IMR-90 (cell line): ENCODE measurements at regions of chr13 and their contacts with region 1.

Region 1: DNA sequence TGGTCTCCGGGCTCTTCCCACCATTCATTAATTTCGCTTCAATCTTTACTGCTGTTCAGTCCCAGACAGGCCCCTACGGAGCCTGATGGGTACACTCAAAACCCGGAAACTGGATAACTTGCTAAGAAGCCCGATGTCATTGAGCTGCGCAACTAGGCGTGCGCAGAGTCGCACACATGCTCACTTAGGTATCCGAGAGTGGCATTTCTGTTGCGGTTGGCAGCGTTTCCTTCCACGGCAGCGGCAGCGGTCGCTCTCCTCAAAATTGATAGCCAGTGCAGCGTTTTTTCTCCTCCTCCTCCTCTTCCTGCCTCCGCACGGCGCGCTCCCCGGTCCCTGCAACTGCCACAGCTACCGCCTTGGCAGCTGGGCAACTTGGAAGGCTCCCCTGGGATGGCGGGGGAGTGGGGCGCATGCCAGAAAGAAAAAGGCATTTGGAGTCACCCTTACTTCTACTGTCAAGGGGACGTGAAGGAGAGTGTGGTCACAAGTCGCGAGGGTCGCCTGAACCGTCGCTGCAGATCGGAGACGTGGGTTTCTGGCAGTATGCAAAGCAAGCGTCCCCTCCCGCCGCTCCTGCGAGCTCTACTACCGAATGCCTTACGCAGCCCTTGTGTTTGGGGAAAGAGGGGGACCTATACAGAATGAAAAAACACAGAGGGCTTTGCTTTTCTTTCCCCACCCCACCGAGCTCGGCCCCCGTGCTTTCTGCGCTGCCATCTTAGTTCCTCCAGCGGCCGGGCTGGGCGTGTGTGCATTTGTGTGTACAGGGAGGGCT is 2.4 kb upstream of the MYCBP2 start:
- DNase-seq: peak; percentile 96
- ATAC-seq: peak; percentile 74
- H3K4me3 ChIP-seq: peak overlapping the region; percentile 80
- H3K27ac ChIP-seq: peak overlapping the region; percentile 76
- H3K4me1 ChIP-seq: no peaks in the 10 kb centered on the region
- H3K27me3 ChIP-seq: peaks cover 2% of the 10 kb centered on the region
- CTCF ChIP-seq: no peak
- POLR2A ChIP-seq: no peak
- RAD21 ChIP-seq: no peak

Region 2: DNA sequence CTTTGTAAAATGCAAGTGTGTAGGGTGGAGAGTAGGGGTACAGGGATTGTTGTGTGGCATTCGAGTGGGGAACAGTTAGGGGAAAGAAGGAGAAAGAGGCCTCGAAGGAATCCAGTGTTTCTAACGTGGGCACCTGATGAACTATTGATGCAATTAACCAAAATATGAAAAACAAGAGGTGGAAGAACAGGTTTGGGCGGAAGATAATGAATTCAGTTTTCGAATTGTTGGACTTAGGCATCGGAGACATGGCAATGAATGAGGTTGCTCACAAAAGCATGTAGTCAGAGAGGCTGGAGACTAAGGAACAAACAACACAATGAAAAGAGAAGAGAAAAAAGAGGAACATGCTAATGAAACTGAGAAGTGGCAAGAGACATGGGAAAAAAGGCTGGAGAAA is 1500.5 kb before region 1 on chr13:
- CTCF ChIA-PET with region 1: no interaction called
- POLR2A ChIA-PET with region 1: no interaction called
- dilution Hi-C with region 1: no loop called
- in situ Hi-C with region 1: no loop called
- intact Hi-C with region 1: no loop called
- DNase-seq: no peak
- ATAC-seq: no peak
- H3K4me3 ChIP-seq: no peak overlapping the region
- H3K27ac ChIP-seq: no peak overlapping the region
- H3K4me1 ChIP-seq: peaks cover 6% of the 10 kb centered on the region; the same call in 1 of the 2 replicates
- H3K27me3 ChIP-seq: no peaks in the 10 kb centered on the region
- CTCF ChIP-seq: no peak
- POLR2A ChIP-seq: no peak
- RAD21 ChIP-seq: no peak

Region 3: GRCh38 chr13:77026818-77027585 is 302.3 kb before region 1 on chr13 and contains the start of gene FBXL3:
- CTCF ChIA-PET with region 1: no interaction called
- POLR2A ChIA-PET with region 1: no interaction called
- dilution Hi-C with region 1: no loop called
- in situ Hi-C with region 1: no loop called
- intact Hi-C with region 1: loop called (anchors 2 kb)
- DNase-seq: peak; percentile 94
- ATAC-seq: peak; percentile 81
- H3K4me3 ChIP-seq: peak within 1 kb of the TSS; percentile 93
- H3K27ac ChIP-seq: peak within 1 kb of the TSS; percentile 94
- H3K4me1 ChIP-seq: peaks cover 12% of the 10 kb centered on the region
- H3K27me3 ChIP-seq: no peaks in the 10 kb centered on the region
- CTCF ChIP-seq: no peak
- POLR2A ChIP-seq: peak; percentile 53; the same call in 1 of the 2 replicates
- RAD21 ChIP-seq: no peak
- total RNA-seq, gene FBXL3: 43.6 and 51.1 TPM in 2 replicates

Region 4: DNA sequence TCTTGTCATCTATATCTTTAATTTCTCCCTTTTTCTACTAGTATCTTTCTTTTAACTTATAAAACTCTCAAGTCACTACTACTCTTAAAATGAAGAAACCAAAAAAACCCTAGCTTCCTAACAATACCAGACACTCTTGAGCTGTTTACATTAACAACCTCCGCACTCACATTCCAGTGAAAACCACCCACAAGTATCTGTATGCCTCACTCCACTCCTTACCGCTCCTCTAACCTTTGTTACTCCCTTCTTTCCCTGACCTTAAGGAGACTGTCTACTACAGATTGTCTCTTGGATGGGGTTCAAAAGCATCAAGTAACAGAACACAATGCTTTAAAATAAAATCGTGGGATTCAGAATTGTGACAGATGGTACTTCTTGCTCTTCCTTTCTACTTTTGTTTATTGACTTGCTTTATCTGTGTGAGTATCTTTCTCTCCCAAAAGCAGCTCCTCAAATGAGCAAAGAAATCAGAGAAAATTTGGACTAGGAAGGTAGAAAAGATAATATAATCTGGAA is 192.4 kb before region 1 on chr13:
- CTCF ChIA-PET with region 1: interaction called, 3 read pairs
- POLR2A ChIA-PET with region 1: no interaction called
- dilution Hi-C with region 1: no loop called
- in situ Hi-C with region 1: no loop called
- intact Hi-C with region 1: loop called (anchors 1 kb)
- DNase-seq: peak; percentile 95
- ATAC-seq: peak; percentile 98
- H3K4me3 ChIP-seq: no peak overlapping the region
- H3K27ac ChIP-seq: no peak overlapping the region
- H3K4me1 ChIP-seq: peaks cover 3% of the 10 kb centered on the region; the same call in 1 of the 2 replicates
- H3K27me3 ChIP-seq: no peaks in the 10 kb centered on the region
- CTCF ChIP-seq: no peak
- POLR2A ChIP-seq: no peak
- RAD21 ChIP-seq: no peak

Region 5: DNA sequence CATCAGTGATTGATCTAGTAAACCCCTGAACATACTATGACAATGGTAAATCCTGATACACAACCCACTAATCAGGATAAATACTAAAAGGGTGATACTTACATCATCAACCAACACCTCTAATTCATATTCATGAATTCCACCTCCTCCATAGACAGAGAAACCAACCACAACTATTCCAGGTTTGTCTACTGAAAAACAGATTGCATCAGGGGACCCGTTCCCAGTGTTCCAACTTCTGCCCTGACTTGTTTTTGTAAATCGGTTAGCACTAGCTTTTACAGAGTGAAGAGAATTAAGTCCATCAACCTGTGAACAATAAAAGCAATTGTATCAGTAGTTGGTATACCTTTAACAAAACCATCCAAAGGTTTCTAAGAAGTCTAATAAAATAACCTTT is 151.7 kb before region 1 on chr13:
- CTCF ChIA-PET with region 1: no interaction called
- POLR2A ChIA-PET with region 1: no interaction called
- dilution Hi-C with region 1: no loop called
- in situ Hi-C with region 1: no loop called
- intact Hi-C with region 1: loop called (anchors 2 kb)
- DNase-seq: no peak
- ATAC-seq: no peak
- H3K4me3 ChIP-seq: no peak overlapping the region
- H3K27ac ChIP-seq: no peak overlapping the region
- H3K4me1 ChIP-seq: no peaks in the 10 kb centered on the region
- H3K27me3 ChIP-seq: no peaks in the 10 kb centered on the region
- CTCF ChIP-seq: no peak
- POLR2A ChIP-seq: no peak
- RAD21 ChIP-seq: no peak

Region 6: GRCh38 chr13:77207943-77208342 is 121.4 kb before region 1 on chr13:
- CTCF ChIA-PET with region 1: no interaction called
- POLR2A ChIA-PET with region 1: no interaction called
- dilution Hi-C with region 1: no loop called
- in situ Hi-C with region 1: no loop called
- intact Hi-C with region 1: loop called (anchors 5 kb)
- DNase-seq: peak; percentile 96
- ATAC-seq: peak; percentile 92
- H3K4me3 ChIP-seq: no peak overlapping the region
- H3K27ac ChIP-seq: peak overlapping the region; percentile 69; the same call in 1 of the 2 replicates
- H3K4me1 ChIP-seq: no peaks in the 10 kb centered on the region
- H3K27me3 ChIP-seq: no peaks in the 10 kb centered on the region
- CTCF ChIP-seq: no peak
- POLR2A ChIP-seq: no peak
- RAD21 ChIP-seq: no peak

Region 7: DNA sequence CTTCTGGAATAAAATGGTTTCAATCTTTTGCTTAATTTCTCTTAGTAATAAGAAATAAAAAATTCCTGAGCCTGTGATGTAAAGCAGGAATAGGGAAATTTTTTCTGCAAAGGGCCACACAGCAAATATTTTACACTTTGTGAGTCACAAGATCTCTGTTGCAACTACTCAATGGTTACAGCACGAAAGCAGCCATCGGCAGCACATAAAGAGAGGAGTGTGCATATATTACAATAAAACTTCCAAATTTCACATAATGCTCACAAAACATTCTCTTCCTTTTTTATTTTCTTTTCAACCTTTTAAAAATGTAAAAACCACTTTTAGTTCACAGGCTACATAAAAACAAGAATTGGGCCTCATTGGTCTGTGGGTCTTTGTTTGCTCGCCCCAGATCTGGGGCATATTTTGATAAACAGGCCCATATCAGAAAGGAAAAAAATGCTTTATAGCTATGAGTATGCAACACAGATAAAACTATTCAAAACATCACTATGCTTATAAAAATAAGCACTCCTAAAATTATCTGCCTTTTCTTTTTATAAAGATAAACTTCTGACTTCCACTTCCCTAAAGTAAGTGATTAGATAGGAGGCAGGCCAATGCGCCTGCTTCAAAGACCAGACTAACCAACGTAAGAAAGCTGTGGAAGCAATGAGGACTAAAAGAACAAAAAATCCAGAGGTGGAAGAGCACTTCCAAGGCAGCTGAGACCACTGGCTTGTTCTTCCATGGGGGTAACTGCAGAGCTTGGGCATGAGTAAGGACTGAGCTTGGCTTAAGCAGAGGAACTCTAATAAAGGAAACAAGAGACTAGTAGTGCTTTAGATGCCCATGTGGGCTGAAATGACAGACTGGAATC is 28.9 kb before region 1 on chr13:
- CTCF ChIA-PET with region 1: no interaction called
- POLR2A ChIA-PET with region 1: interaction called, 3 read pairs
- dilution Hi-C with region 1: no loop called
- in situ Hi-C with region 1: no loop called
- intact Hi-C with region 1: loop called (anchors 1 kb)
- DNase-seq: peak; percentile 86
- ATAC-seq: peak; percentile 87
- H3K4me3 ChIP-seq: no peak overlapping the region
- H3K27ac ChIP-seq: peak overlapping the region; percentile 97
- H3K4me1 ChIP-seq: peaks cover 4% of the 10 kb centered on the region
- H3K27me3 ChIP-seq: no peaks in the 10 kb centered on the region
- CTCF ChIP-seq: no peak
- POLR2A ChIP-seq: no peak
- RAD21 ChIP-seq: no peak

Region 8: GRCh38 chr13:77480066-77480465 is 150.7 kb after region 1 on chr13:
- CTCF ChIA-PET with region 1: interaction called, 8 read pairs
- POLR2A ChIA-PET with region 1: no interaction called
- dilution Hi-C with region 1: no loop called
- in situ Hi-C with region 1: no loop called
- intact Hi-C with region 1: loop called (anchors 1 kb)
- DNase-seq: no peak
- ATAC-seq: no peak
- H3K4me3 ChIP-seq: no peak overlapping the region
- H3K27ac ChIP-seq: no peak overlapping the region
- H3K4me1 ChIP-seq: no peaks in the 10 kb centered on the region
- H3K27me3 ChIP-seq: peaks cover 2% of the 10 kb centered on the region; the same call in 1 of the 2 replicates
- CTCF ChIP-seq: no peak
- POLR2A ChIP-seq: no peak
- RAD21 ChIP-seq: no peak

Region 9: DNA sequence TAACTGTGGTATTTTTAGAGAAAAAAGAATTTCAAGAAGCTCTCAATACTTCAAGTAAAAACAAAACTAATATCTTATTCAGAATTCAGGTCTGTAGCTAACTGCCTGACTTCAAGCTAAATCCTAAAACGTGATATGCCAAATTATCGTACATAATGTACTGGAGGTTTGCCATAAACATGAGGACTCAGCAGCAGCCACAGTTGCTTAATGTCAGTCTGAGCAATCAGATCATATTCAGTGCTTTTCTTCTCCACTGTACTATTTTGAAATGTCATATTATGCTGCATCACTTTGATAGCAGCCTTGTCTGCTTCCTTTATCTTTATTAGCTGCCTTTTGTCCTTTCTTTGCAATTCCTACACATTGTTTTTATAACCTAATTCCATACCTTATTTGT is 854.4 kb after region 1 on chr13:
- CTCF ChIA-PET with region 1: no interaction called
- POLR2A ChIA-PET with region 1: no interaction called
- dilution Hi-C with region 1: no loop called
- in situ Hi-C with region 1: no loop called
- intact Hi-C with region 1: no loop called
- DNase-seq: peak; percentile 52
- ATAC-seq: no peak
- H3K4me3 ChIP-seq: no peak overlapping the region
- H3K27ac ChIP-seq: no peak overlapping the region
- H3K4me1 ChIP-seq: no peaks in the 10 kb centered on the region
- H3K27me3 ChIP-seq: no peaks in the 10 kb centered on the region
- CTCF ChIP-seq: no peak
- POLR2A ChIP-seq: no peak
- RAD21 ChIP-seq: no peak